Natural killer cell (primary cell): ENCODE measurements at regions of chr9 and their contacts with region 1.

Region 1: DNA sequence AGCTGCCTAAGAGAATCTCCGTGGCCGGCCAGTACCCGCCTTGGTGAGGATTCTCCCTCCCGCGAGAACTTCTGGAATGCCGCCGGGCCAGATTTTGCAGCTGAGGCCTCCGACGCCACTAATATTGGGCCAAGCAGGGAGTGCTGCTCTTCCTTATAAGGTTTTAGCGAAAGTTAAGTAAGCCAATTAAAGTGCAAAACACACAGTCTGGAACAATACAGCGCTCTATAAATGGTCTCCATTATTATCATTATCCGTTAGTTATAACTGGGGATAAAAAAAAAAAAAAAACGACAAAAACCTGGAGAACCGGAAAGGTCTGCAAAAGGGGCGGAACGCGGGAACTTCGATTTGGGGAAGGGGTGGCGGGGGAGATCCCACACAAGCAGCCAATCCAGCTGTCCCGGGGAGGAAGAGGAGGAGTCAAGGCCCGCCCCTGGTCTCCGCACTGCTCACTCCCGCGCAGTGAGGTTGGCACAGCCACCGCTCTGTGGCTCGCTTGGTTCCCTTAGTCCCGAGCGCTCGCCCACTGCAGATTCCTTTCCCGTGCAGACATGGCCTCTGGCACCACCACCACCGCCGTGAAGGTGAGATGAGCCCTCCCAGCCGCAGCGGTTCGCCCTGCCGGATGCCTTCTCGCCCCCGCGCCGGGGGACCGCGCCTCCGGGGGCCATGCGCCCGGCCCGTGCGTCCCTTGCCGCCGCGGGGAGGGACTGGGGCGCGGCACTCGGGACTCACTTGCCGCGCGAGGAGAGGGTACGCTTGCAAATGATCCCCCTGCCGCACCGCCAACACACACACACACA is at the start of gene MTAP:
- DNase-seq: peak; percentile 48 to 80
- ATAC-seq: peak; percentile 77 to 80 (median 79)
- H3K4me3 ChIP-seq: peak within 1 kb of the TSS; percentile 79
- H3K4me3 Mint-ChIP-seq: peak within 1 kb of the TSS; percentile 99
- H3K27ac ChIP-seq: peak within 1 kb of the TSS; percentile 50
- H3K27ac Mint-ChIP-seq: peak within 1 kb of the TSS; percentile 90 to 97
- H3K4me1 ChIP-seq: peaks cover 16% of the 10 kb centered on the region
- H3K4me1 Mint-ChIP-seq: peaks cover 40 to 46% of the 10 kb centered on the region in 2 donors
- H3K27me3 ChIP-seq: peaks cover 7% of the 10 kb centered on the region
- H3K27me3 Mint-ChIP-seq: peaks cover 9 to 13% of the 10 kb centered on the region in 2 donors
- CTCF ChIP-seq: no peak
- total RNA-seq, gene MTAP: 19.4 to 20.7 (median 19.6) TPM

Region 2: DNA sequence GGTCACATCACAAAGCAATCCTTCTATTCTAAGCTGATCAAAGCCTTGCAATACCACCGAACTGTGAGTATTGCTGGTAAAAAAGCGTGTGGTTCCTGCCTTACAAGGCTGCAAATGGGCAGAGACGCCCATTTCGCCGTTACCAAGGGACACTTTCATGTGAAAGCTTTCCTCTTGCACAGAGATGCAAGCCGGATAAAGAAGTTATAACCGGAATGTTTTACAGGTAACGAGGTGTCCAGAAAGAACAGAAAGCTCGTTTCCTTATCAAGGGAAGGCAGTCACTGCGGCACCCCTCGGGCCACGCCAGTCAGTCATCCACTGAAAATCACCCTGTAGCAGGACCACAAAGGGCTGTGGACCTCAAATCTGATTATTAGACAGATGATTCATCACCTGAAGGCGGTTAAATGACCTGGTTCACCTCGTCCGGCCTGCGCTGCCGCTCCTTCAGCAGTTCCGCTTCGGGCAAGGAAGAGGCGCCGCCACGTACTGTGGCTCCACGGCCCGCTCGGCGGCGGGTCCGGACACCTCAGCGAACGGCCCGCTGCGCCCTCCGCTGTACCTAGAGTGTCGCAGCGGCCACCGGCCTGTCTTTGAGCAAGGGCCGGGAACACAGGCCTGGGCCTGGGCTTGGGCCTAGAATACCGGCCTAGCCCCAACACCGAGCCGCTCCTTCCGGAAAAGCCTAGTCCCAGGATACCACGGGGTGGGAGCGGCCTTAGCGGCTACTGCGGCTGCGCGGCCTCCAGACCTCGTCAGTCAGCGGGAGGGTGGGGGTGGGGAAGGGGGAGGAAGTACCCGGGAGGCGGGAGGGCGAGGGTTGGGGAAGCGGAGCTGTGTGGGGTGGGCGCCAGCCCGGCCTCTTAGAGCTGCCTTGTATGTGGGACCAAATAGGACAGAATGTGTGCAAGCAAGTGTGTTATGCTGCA is 467.4 kb before region 1 on chr9 and contains the start of gene KLHL9:
- intact Hi-C with region 1: loop called (anchors 5 kb)
- DNase-seq: peak; percentile 81 to 93
- ATAC-seq: peak; percentile 87 to 91 (median 90)
- H3K4me3 ChIP-seq: peak within 1 kb of the TSS; percentile 74
- H3K4me3 Mint-ChIP-seq: peak within 1 kb of the TSS; percentile 94
- H3K27ac ChIP-seq: peak within 1 kb of the TSS; percentile 93
- H3K27ac Mint-ChIP-seq: peak within 1 kb of the TSS; percentile 91
- H3K4me1 ChIP-seq: peaks cover 8% of the 10 kb centered on the region
- H3K4me1 Mint-ChIP-seq: peaks cover 45 to 48% of the 10 kb centered on the region in 2 donors
- H3K27me3 ChIP-seq: no peaks in the 10 kb centered on the region
- H3K27me3 Mint-ChIP-seq: peaks cover 8 to 9% of the 10 kb centered on the region in 2 donors
- CTCF ChIP-seq: no peak
- total RNA-seq, gene KLHL9: 13.5 to 17.2 (median 13.6) TPM